CD8-positive, alpha-beta T cell (primary cell): ENCODE measurements at regions of chrX and their contacts with region 1.

Region 1: GRCh38 chrX:63560601-63561218 is 209.6 kb upstream of the SPIN4 start:
- DNase-seq: peak; percentile 3 to 78 (median 53)
- ATAC-seq: peak; percentile 86
- H3K4me3 ChIP-seq: peak overlapping the region; percentile 71 to 93
- H3K4me3 Mint-ChIP-seq: peak overlapping the region; percentile 93
- H3K27ac ChIP-seq: peak overlapping the region; percentile 69 to 76
- H3K27ac Mint-ChIP-seq: peak overlapping the region; percentile 93
- H3K4me1 ChIP-seq: peaks cover 14% of the 10 kb centered on the region
- H3K4me1 Mint-ChIP-seq: peaks cover 37% of the 10 kb centered on the region
- H3K27me3 ChIP-seq: no peaks in the 10 kb centered on the region
- H3K27me3 Mint-ChIP-seq: no peaks in the 10 kb centered on the region
- CTCF ChIP-seq: no peak

Region 2: DNA sequence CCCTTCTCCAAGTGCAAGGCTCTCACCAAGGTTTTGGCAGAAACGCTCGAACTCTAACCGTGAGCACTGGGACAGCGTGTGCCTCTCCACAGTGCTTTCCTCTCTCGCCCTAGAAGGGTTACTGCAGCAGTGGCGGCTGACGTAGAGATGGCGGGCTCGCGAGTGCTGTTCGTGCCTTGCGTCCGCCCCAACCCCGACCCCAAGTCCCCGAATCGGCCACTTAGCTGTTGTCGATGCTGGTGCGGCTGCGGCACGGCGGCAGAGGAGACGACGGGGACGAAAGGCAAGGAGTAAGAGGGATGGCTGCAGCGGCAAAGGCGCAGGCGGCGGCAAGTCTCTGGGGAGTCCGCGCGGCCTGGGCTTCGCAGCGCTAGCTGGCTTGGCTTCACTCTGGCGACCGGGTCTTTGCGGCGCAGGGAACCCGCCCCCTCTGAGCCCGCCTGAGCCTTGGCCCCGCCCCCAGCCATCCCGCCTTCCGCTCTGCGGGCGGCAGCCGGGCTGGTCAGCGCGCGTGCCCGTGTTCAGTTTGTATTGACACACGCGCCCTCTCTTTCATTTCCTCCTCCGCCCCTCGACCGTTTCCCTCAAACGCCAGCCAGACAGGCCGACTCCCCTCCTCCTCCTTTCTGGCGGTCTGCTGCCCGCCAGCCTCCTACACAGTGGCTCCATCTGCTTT is 209.6 kb before region 1 on chrX and contains the start of gene SPIN4:
- CTCF ChIA-PET with region 1: no interaction called
- POLR2A ChIA-PET with region 1: no interaction called
- intact Hi-C with region 1: loop called in 1 of 2 experiments (anchors 2 kb)
- DNase-seq: peak; percentile 7 to 79 (median 53)
- ATAC-seq: peak; percentile 80
- H3K4me3 ChIP-seq: peak within 1 kb of the TSS; percentile 66 to 71
- H3K4me3 Mint-ChIP-seq: peak within 1 kb of the TSS; percentile 91
- H3K27ac ChIP-seq: peak within 1 kb of the TSS; percentile 29 to 63
- H3K27ac Mint-ChIP-seq: peak within 1 kb of the TSS; percentile 66
- H3K4me1 ChIP-seq: peaks cover 8% of the 10 kb centered on the region
- H3K4me1 Mint-ChIP-seq: peaks cover 26% of the 10 kb centered on the region
- H3K27me3 ChIP-seq: no peaks in the 10 kb centered on the region
- H3K27me3 Mint-ChIP-seq: no peaks in the 10 kb centered on the region
- CTCF ChIP-seq: no peak
- total RNA-seq, gene SPIN4: 1.0 to 1.3 TPM

Region 3: DNA sequence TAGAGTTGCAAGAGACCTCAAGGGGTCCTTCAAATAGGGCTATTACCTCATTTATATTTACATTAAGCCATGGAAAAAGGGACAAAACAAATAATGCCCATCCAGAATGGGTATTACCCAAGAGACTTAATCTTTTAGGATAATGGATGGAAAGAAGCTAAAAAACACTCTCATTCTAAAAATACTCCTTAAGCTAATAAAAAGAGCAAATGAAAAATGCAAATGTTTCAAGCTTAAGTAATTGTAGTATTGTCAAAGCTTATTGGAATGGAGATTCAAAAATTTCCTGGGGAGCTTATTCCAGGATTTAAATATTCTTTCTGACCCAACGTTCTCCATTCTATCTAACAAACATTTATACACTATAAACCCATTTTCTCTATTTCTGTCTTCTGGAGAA is 101.7 kb before region 1 on chrX:
- CTCF ChIA-PET with region 1: no interaction called
- POLR2A ChIA-PET with region 1: no interaction called
- intact Hi-C with region 1: no loop called
- DNase-seq: no peak
- ATAC-seq: no peak
- H3K4me3 ChIP-seq: no peak overlapping the region
- H3K4me3 Mint-ChIP-seq: no peak overlapping the region
- H3K27ac ChIP-seq: no peak overlapping the region
- H3K27ac Mint-ChIP-seq: no peak overlapping the region
- H3K4me1 ChIP-seq: no peaks in the 10 kb centered on the region
- H3K4me1 Mint-ChIP-seq: no peaks in the 10 kb centered on the region
- H3K27me3 ChIP-seq: no peaks in the 10 kb centered on the region
- H3K27me3 Mint-ChIP-seq: no peaks in the 10 kb centered on the region
- CTCF ChIP-seq: no peak

Region 4: DNA sequence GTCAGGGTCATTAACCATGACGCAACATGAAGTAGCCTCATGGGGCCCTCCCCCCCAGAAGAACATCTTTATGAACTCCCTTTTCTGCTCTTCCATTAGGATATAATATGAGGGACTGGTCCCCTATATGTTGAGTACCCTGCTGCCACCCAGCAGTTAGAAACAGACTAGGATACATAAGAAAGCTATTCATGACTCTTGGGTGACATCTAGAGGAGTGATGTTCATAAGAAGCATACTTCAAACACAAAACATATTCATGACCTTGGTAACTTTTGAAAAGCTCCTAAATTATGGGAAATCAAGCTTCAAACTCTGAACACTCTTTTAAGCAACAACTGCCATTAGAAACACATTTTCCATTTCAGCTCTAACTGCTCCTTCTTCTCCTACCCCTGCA is 54.4 kb before region 1 on chrX:
- CTCF ChIA-PET with region 1: no interaction called
- POLR2A ChIA-PET with region 1: no interaction called
- intact Hi-C with region 1: no loop called
- DNase-seq: peak in 2 of 9 experiments; percentile 27 to 46
- ATAC-seq: no peak
- H3K4me3 ChIP-seq: no peak overlapping the region
- H3K4me3 Mint-ChIP-seq: no peak overlapping the region
- H3K27ac ChIP-seq: no peak overlapping the region
- H3K27ac Mint-ChIP-seq: no peak overlapping the region
- H3K4me1 ChIP-seq: no peaks in the 10 kb centered on the region
- H3K4me1 Mint-ChIP-seq: peaks cover 25% of the 10 kb centered on the region
- H3K27me3 ChIP-seq: no peaks in the 10 kb centered on the region
- H3K27me3 Mint-ChIP-seq: no peaks in the 10 kb centered on the region
- CTCF ChIP-seq: no peak

Region 5: GRCh38 chrX:63889001-63889400 is 328.3 kb after region 1 on chrX:
- CTCF ChIA-PET with region 1: no interaction called
- POLR2A ChIA-PET with region 1: no interaction called
- intact Hi-C with region 1: no loop called
- DNase-seq: no peak
- ATAC-seq: no peak
- H3K4me3 ChIP-seq: no peak overlapping the region
- H3K4me3 Mint-ChIP-seq: no peak overlapping the region
- H3K27ac ChIP-seq: no peak overlapping the region
- H3K27ac Mint-ChIP-seq: no peak overlapping the region
- H3K4me1 ChIP-seq: no peaks in the 10 kb centered on the region
- H3K4me1 Mint-ChIP-seq: no peaks in the 10 kb centered on the region
- H3K27me3 ChIP-seq: no peaks in the 10 kb centered on the region
- H3K27me3 Mint-ChIP-seq: no peaks in the 10 kb centered on the region
- CTCF ChIP-seq: no peak